Transverse colon (tissue), 4 donors: ENCODE measurements at regions of chr12 and their contacts with region 1.

Region 1: DNA sequence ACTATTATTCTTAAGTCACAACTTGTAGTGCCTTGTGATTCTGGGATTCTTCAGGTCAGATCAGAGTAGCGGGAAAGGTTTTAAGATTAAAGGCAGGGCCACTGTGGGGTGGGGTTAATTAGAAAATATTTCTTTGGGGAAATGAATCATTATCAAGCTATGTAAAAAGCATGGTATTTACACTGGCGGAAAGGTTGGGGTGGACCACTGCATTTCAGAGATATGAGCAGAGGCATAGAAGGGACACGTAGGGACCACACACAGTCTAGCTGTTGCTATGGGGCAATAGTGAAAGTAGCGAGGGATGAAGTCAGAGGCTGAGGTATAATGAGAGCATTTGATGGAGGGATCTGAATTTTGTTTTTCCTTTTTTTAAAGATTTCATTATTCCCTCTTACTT is 31.7 kb upstream of the KCNH3 start:
- DNase-seq: no peak
- H3K4me3 ChIP-seq: no peak overlapping the region
- H3K27ac ChIP-seq: no peak overlapping the region
- H3K4me1 ChIP-seq: peaks cover 0 to 4% (median 0%) of the 10 kb centered on the region in 4 donors
- H3K27me3 ChIP-seq: no peaks in the 10 kb centered on the region
- CTCF ChIP-seq: no peak
- EP300 ChIP-seq: no peak
- POLR2A ChIP-seq: no peak

Region 2: DNA sequence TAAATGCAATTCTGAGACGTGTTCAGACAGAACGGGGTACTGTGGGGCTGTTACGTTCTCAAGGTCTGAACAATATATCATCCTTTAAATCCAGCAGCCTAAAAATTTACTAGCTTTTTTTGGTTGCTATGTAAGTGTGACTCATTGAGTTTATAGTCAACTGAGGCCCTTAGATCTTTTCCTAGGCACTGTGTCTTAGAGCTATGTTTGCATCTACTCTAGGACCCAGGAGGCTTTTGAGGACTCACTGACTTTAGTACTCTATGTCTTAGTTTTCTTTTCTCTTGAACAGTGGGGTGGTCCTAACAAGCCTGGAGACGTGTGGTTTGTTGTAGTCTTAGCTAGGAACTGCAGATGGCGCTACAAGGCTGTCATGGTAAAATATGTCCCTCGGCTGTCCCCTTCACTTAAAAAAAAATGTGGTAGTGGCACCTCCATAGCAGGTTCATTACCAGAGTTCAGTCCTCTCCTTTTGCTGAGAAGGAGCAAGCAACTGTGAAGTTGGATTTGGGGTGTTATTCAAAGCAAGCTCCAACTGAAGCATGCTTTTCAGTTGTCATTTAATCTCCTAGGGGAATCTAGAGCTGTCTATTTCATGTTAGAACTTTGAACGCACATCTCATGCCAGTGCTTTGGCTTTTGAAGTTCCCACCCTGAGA is 148.5 kb before region 1 on chr12:
- in situ Hi-C with region 1: no loop called
- intact Hi-C with region 1: loop called (anchors 5 kb)
- DNase-seq: peak; percentile 56
- H3K4me3 ChIP-seq: no peak overlapping the region
- H3K27ac ChIP-seq: no peak overlapping the region
- H3K4me1 ChIP-seq: peaks cover 0 to 17% (median 0%) of the 10 kb centered on the region in 4 donors
- H3K27me3 ChIP-seq: peaks cover 2% of the 10 kb centered on the region
- CTCF ChIP-seq: peak; percentile 69 to 83 (median 73)
- EP300 ChIP-seq: no peak
- POLR2A ChIP-seq: no peak

Region 3: GRCh38 chr12:49369411-49370145 is 137.6 kb before region 1 on chr12:
- in situ Hi-C with region 1: loop called in 1 of 4 experiments (anchors 5 kb)
- intact Hi-C with region 1: no loop called
- DNase-seq: peak; percentile 63
- H3K4me3 ChIP-seq: no peak overlapping the region
- H3K27ac ChIP-seq: peak overlapping the region; percentile 15 to 99 (median 46)
- H3K4me1 ChIP-seq: peaks cover 9 to 28% (median 23%) of the 10 kb centered on the region in 4 donors
- H3K27me3 ChIP-seq: no peaks in the 10 kb centered on the region
- CTCF ChIP-seq: peak; percentile 20 to 50 (median 34)
- EP300 ChIP-seq: no peak
- POLR2A ChIP-seq: no peak

Region 4: DNA sequence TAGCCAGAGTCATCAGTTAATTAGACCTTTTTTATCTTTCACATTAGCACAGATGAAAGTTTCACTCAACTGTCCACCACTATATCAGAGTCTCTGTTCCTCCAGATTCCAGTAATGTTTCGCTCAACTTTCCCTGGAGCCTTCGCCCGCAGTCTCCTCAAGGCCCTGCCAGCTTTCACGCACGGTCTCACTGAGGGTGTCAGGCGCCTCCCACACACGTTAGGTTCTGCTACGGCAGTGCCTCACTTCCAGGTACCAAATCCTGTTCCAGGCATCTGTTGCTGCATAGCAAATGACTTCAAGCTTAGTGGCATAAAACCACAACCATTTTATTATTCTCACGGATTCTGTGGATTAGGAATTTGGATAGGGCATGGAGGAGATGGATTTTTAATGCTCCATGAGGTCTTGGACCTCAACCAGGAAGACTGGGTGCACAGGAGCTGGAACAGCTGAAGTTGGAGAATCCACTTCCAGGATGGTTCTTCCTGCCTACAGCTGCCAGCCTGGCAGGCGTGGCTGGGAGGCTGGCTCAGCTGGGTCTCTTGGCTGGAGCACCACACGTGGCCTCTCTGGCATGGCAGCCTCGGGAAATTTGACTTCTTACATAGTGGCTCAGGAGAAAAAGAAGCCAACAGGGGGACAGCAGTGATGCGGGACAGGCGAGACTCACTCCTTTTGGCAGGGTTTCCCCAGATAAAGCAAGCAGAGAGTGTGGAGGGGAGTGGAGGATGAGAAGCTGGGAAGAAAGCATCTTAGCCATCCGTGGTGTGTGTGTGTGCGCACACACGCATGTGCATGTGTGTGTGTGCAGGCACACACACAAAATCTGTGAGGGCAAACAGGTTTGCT is 357.0 kb after region 1 on chr12:
- in situ Hi-C with region 1: no loop called
- intact Hi-C with region 1: no loop called
- DNase-seq: no peak
- H3K4me3 ChIP-seq: no peak overlapping the region
- H3K27ac ChIP-seq: no peak overlapping the region
- H3K4me1 ChIP-seq: peaks cover 0 to 21% (median 7%) of the 10 kb centered on the region in 4 donors
- H3K27me3 ChIP-seq: peaks cover 4% of the 10 kb centered on the region
- CTCF ChIP-seq: no peak
- EP300 ChIP-seq: no peak
- POLR2A ChIP-seq: no peak